ENCODE measurements at regions of chr11 and their contacts with region 1.

Region 1: DNA sequence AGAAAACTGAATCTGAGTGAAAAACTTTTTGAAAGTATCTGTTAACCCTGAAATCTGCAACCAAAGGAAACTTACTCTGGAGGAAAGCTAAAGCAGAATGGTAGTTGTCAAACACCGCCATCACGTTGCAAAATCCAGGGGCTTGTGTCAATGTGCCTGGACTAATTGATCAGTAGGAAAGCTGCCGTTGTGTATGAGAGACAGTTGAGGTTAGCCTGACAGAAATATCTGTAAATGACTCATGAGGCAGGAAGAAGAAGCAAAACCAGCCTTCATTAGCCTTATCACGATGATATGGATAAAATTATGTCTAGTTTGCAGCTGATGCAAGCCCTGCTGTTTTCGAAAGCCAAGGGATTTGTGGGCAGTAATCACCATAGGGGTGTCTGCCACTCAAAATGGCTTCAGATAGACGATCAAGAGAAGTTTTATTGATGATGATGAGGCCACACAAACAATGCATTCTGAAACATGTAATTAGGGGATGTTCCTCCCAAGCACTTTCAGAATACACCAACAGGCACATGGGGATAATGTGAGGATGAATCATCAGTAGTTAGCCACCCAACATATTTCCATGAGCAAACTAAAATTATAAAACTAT is 8.9 kb downstream of the SCGB1A1 start:
- DNase-seq: no peak
- H3K4me3 ChIP-seq: no peak overlapping the region
- H3K27ac ChIP-seq: no peak overlapping the region
- H3K4me1 ChIP-seq: peaks cover 0 to 6% (median 0%) of the 10 kb centered on the region in 3 donors
- H3K27me3 ChIP-seq: no peaks in the 10 kb centered on the region
- CTCF ChIP-seq: no peak

Region 2: DNA sequence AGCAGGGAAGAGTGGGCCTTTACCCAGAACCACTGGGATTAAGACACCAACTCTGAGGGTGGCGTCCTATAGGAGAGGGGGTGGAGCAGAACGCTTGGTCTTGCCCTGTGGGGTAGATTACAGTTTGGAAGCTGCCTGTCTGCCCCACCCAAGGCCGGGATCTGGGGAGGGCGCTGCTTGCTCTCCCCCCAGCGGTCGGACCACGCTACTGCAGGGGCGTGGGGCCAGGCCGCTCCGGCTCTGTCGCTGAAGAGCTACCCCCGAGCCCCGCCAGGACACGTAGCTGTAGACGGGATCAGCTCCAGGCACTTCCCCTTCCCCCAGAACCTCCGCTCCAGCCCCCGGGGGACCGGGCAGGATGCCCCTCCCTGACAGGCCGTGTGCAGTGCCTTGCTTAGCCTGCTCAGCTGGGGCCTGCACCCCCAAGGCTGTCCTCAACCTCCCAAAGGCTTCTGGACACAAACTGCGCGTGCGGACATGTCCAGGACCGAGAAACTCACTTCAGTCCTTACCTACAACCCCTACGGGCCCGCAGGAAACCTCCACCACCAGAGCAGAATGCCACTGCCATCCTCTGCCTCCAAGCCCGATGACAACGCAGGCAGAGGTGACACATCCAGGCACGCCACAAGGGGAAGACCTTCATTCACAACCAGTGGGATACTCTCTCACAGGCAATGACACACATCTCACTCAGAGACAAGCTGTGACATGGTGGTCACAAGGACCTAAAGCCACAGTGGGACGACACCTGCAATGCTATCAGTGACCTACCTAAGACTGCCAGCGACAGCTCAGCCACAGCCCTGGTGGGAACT is 115.2 kb after region 1 on chr11:
- intact Hi-C with region 1: loop called (anchors 10 kb)
- DNase-seq: peak; percentile 74 to 93 (median 83)
- H3K4me3 ChIP-seq: peak overlapping the region in 2 of 3 donors; percentile 37 to 90
- H3K27ac ChIP-seq: peak overlapping the region; percentile 97 to 99
- H3K4me1 ChIP-seq: peaks cover 0 to 62% (median 41%) of the 10 kb centered on the region in 3 donors
- H3K27me3 ChIP-seq: no peaks in the 10 kb centered on the region
- CTCF ChIP-seq: peak; percentile 96

Measured in kidney (tissue), 22 donors.